Cardiac septum (tissue), 1 donor: ENCODE measurements at regions of chr2 and their contacts with region 1.

Region 1: DNA sequence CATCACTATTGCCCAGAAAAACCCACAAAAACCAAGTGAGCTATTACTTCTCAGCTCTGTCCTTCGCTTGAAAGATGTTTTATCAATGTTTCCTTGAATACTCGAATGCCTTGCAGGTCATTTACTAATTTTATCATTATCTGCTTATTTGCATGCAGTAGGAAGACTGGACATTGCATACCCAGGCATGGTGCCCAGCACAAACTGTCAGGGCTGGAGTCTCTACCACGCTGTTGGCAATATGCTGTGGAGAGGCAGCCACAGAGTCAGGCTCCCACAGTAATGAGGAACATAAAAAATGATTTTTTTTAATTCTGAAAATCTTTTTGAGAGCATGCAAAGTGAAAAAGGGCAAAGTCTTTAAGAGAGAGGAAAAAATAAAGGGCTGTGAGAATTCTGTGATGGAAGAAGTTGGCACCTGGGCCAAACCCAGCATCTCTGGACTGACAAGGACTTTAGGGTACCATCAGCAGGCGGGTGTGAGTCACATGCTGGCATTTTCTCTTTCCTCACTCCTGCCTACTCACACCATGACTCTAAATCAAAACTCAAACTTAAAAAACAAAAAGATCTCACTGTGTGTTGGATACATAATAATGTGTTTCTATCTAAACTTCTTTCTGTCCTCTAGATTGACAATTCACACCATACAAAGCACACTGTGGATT is 709.8 kb upstream of the FANCL start:
- DNase-seq: peak; percentile 78

Region 2: DNA sequence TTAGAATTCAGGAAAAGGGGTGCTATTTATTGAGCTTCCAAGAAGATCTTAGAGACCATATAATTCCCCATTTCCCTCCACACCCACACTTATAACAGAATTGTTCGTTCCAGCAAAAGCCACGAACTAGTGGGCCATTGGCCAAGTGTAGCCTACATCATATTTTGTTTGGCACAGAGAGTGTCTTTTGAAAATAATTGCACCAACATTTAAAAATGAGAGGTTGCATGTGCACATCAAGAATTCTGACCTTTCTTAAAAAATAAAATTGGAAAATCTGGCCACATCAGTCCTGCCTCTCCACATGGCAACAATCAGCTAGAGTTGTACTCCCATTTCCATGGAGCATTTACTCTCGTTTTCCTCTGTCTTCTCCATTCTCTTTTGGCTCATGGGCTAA is 54.3 kb before region 1 on chr2:
- intact Hi-C with region 1: loop called (anchors 5 kb)
- DNase-seq: no peak